Transverse colon (tissue), 4 donors: ENCODE measurements at regions of chr3 and their contacts with region 1.

Region 1: DNA sequence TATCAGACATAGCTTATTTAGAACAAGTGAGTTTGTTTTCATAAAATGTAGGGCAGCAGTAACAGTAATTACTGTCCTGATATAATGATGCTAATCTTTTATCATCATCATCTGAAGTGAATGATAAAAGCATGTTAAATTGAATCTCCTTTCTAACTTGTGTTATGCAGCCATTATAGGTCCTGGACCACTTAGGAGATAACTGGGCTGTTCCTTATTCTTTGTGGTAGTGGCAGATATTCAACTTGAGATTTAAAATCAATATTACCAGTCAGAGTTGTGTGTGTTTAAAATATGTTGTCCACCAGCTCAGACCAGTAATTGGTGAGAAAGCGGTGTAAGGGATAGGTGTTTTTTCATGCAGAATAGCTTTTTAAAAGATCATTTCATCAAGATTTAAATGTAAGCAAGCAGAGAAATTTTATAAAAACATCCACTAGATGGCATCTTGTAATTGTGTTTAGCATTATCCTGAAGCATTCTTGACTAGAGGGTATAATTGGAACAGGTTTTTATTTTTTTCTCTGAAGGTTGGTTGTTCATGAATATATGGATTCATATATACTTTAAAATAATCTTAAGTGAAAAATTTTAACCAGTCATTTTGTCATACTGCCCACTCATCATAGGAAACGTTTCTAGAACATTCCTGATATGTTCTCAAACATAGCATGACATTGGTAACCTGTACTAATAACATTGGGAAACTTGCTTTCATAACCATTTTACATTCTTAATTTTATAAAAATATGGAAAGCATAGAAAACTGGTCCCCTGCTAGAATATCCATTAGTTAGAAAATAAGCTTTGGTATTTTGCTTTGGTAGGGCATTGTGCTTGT is 153.9 kb downstream of the BBX start:
- DNase-seq: no peak
- H3K4me3 ChIP-seq: no peak overlapping the region
- H3K27ac ChIP-seq: no peak overlapping the region
- H3K4me1 ChIP-seq: peaks cover 0 to 23% (median 10%) of the 10 kb centered on the region in 4 donors
- H3K27me3 ChIP-seq: no peaks in the 10 kb centered on the region
- CTCF ChIP-seq: peak; percentile 48 to 63 (median 53)
- EP300 ChIP-seq: no peak
- POLR2A ChIP-seq: no peak

Region 2: GRCh38 chr3:107045791-107046190 is 630.9 kb before region 1 on chr3:
- in situ Hi-C with region 1: no loop called
- intact Hi-C with region 1: no loop called
- DNase-seq: no peak
- H3K4me3 ChIP-seq: no peak overlapping the region
- H3K27ac ChIP-seq: no peak overlapping the region
- H3K4me1 ChIP-seq: no peaks in the 10 kb centered on the region
- H3K27me3 ChIP-seq: no peaks in the 10 kb centered on the region
- CTCF ChIP-seq: no peak
- EP300 ChIP-seq: no peak
- POLR2A ChIP-seq: no peak

Region 3: DNA sequence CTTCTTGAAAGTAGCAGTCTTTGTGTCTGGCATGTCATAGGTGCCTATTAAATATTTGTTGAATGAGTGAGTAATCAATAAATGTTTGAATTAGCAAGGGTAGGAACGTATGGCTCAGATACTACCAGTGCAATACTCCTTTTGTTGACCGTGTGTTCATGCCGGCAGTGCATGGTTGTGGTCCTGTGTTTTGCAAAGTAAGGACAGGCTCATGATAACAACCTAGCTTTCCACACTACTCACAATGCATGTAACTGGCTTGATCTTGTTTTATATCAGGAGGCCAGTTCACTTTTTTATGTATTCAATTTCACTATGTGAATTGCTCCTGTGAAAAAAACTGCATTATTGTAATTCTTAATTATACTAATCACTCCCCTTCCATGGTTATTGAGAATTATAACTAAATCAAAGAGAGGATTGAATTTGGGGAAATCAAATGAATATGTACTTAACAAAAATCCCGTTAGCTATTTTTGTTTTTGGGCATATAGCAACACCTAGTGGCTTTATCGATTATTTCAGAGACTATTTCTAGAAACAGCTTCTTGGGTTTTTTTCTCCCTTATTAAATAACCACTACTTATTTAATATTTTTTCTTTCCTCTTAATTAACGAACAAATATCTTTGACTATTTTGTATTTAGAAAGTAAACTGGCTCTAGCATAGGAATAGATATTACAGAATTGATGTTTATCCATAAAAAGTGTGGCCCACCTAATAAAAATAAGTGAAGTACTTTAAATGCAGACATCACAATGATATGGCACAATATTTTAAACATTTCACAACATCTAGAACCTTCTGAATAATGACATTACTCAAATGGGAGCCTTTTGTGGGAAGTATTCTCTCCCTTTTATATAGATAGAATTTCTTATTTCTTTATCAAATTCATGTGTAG is 64.6 kb after region 1 on chr3:
- in situ Hi-C with region 1: loop called in 1 of 4 experiments (anchors 10 kb)
- intact Hi-C with region 1: no loop called
- DNase-seq: no peak
- H3K4me3 ChIP-seq: no peak overlapping the region
- H3K27ac ChIP-seq: no peak overlapping the region
- H3K4me1 ChIP-seq: no peaks in the 10 kb centered on the region
- H3K27me3 ChIP-seq: no peaks in the 10 kb centered on the region
- CTCF ChIP-seq: peak; percentile 45 to 57 (median 46)
- EP300 ChIP-seq: no peak
- POLR2A ChIP-seq: no peak